ENCODE measurements at regions of chr22 and their contacts with region 1.

Region 1: DNA sequence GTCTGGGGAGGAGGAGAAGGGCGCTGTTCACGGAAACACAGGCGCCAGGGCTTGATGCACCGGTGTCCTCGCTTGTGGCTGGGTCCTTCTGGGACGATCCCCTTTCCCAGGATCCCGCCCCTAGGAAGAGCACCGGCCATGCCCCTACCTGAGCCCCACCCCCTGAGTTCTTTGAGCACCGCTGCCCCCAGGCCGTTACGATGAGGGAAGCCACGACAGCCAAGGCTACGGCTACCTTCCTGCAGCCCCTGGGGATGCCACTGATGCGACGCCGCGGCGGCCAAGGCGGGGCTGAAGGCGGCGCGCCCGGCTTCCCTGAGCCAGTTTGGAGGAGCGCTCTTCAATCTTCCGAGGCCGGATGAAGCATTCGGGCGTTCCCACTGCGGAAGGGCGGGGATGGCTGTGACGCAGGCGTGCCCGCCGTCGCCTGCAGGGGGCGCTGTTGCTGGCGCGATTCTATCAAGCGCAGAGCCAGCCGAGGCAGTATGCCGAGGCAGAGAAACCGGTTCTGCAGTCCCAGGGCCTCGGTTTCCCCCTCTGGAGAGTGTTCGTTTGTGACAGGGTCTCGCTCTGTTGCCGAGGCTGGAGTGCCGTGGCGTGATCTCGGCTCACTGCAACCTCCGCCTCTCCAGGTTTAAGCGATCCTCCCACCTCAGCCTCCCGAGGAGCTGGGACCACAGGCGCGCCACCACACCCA is 9.7 kb upstream of the NEFH start:
- DNase-seq: peak; percentile 65 to 87
- H3K4me3 ChIP-seq: peak overlapping the region; percentile 43
- H3K4me3 Mint-ChIP-seq: peak overlapping the region; percentile 77
- H3K27ac Mint-ChIP-seq: no peak overlapping the region
- H3K4me1 ChIP-seq: peaks cover 3% of the 10 kb centered on the region; the same call in 1 of the 2 replicates
- H3K4me1 Mint-ChIP-seq: peaks cover 6% of the 10 kb centered on the region
- H3K27me3 ChIP-seq: no peaks in the 10 kb centered on the region
- H3K27me3 Mint-ChIP-seq: peaks cover 4% of the 10 kb centered on the region
- CTCF ChIP-seq: peak; percentile 94

Region 2: DNA sequence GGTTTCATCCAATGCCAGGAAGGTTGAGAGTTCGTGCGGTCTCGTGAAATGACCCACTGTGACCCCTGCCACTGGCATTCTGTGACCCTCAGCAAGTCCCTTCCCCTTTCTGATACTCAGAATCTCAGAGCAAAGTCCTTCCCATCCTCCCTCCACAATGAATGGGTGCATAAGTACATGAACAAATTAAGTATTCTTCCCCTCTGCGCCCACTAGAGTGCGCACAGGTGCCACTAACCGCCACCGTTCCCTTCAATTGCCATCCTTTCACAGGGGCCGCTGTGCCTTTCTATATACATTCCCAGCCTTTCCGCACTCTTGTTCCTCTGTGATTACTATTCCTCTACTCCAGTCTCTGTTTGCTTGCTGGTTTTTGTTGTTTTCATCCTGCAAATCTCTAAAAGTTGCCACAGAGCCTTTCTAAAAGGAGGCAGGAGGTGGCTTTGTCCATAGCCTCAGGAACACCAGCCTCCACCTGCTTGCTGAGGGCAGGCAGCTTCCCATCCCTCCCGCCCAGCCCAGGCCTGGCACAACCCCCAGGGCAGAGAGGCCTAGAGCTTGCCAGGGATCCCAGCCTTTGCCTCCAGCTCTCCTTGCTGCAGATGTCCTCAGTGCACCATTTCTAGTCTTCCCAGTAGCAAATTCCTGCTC is 75.3 kb before region 1 on chr22:
- CTCF ChIA-PET with region 1: no interaction called
- POLR2A ChIA-PET with region 1: no interaction called
- intact Hi-C with region 1: loop called (anchors 1 kb)
- DNase-seq: peak; percentile 66 to 77
- H3K4me3 ChIP-seq: no peak overlapping the region
- H3K4me3 Mint-ChIP-seq: no peak overlapping the region
- H3K27ac Mint-ChIP-seq: no peak overlapping the region
- H3K4me1 ChIP-seq: peaks cover 11% of the 10 kb centered on the region
- H3K4me1 Mint-ChIP-seq: peaks cover 5% of the 10 kb centered on the region
- H3K27me3 ChIP-seq: no peaks in the 10 kb centered on the region
- H3K27me3 Mint-ChIP-seq: peaks cover 3% of the 10 kb centered on the region
- CTCF ChIP-seq: peak; percentile 80 to 83